ENCODE measurements at regions of chr2 and their contacts with region 1.

Region 1: DNA sequence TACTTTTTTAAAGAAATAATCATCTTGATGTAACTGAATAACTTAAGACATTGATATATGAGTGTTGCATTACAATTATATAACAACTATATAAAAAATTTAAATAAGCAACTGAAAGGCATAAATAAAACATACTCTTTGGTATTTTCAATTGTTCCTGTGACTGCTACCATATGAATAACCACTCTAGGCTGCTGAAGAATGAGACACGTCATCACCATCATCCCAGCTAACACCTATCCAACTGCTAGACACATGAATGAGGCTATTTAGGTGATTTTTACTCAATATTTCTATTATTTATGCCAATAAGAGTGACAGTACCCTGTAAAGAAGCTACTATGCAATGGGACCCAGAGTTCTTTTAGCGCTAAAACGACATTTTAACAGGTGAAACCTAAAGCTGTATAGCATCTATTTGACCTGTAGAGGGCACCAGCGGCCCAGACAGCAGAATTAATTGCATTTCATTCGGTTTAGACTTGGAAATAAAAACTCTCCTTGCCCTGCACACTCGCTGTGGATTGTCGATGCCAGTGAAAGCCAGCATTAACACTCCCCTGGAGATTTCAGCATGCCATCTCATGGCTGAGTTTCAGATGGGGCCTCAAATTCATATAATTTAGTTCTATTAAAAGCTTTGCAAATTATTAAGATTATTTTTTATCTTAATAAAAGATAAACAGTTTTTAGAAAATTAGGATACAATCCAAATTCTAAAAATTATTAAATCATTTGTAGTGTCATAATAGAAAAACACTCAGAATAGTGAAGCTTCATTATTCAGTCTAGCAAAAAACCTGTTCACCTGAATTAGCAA is 89.4 kb upstream of the MAP2 start:
- DNase-seq: peak; percentile 37
- ATAC-seq: peak; percentile 73; the same call in 1 of the 2 replicates
- H3K4me3 ChIP-seq: no peak overlapping the region
- H3K27ac ChIP-seq: no peak overlapping the region
- H3K4me1 ChIP-seq: no peaks in the 10 kb centered on the region
- H3K27me3 ChIP-seq: no peaks in the 10 kb centered on the region
- CTCF ChIP-seq: peak; percentile 86
- POLR2A ChIP-seq: no peak
- RAD21 ChIP-seq: peak; percentile 88

Region 2: DNA sequence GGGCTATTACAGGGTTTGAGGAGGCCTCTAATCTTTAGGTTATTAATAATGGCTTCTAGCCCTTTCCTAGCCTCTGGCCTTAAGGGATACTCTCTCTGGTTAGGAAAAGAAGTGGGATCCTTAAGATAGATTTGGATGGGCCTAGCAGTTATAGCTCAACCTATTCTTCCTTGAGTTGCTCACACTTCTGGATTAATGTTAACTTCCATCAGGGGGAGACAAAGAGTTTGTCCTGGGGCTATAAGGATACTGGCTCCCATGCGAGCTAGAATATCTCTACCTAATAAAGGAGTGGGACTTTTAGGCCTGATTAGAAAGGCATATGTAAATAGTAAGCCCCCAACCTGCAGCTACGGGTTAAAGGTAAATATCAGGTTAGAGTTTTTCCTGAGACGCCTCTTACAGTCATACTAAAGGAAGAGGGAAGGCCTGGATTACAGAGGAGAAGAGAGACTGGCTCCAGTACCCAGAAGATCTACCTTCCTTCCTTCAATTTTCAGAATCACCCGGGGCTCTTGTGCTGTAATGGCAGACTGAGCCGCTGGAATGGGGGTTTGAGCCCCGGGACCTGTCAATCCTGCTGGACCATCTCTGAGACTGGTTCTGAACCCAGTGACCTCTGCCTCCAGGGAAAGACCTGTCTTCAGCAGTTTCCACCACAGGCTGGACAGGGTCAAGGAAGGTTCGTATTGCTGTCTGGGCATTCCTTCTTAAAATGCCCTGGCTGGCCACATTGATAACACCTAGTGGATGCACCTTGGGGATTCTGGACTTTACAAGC is 941.9 kb before region 1 on chr2:
- CTCF ChIA-PET with region 1: interaction called, 3 read pairs
- POLR2A ChIA-PET with region 1: no interaction called
- dilution Hi-C with region 1: no loop called
- in situ Hi-C with region 1: no loop called
- intact Hi-C with region 1: loop called (anchors 2 kb)
- DNase-seq: no peak
- ATAC-seq: no peak
- H3K4me3 ChIP-seq: no peak overlapping the region
- H3K27ac ChIP-seq: no peak overlapping the region
- H3K4me1 ChIP-seq: no peaks in the 10 kb centered on the region
- H3K27me3 ChIP-seq: no peaks in the 10 kb centered on the region
- CTCF ChIP-seq: peak; percentile 22
- POLR2A ChIP-seq: no peak
- RAD21 ChIP-seq: no peak

Region 3: GRCh38 chr2:208985644-208986043 is 348.8 kb before region 1 on chr2:
- CTCF ChIA-PET with region 1: no interaction called
- POLR2A ChIA-PET with region 1: no interaction called
- dilution Hi-C with region 1: no loop called
- in situ Hi-C with region 1: no loop called
- intact Hi-C with region 1: no loop called
- DNase-seq: no peak
- ATAC-seq: no peak
- H3K4me3 ChIP-seq: no peak overlapping the region
- H3K27ac ChIP-seq: no peak overlapping the region
- H3K4me1 ChIP-seq: no peaks in the 10 kb centered on the region
- H3K27me3 ChIP-seq: no peaks in the 10 kb centered on the region
- CTCF ChIP-seq: no peak
- POLR2A ChIP-seq: no peak
- RAD21 ChIP-seq: no peak

Region 4: GRCh38 chr2:209314653-209315052 is 19.8 kb before region 1 on chr2:
- CTCF ChIA-PET with region 1: no interaction called
- POLR2A ChIA-PET with region 1: no interaction called
- dilution Hi-C with region 1: no loop called
- in situ Hi-C with region 1: no loop called
- intact Hi-C with region 1: no loop called
- DNase-seq: no peak
- ATAC-seq: no peak
- H3K4me3 ChIP-seq: no peak overlapping the region
- H3K27ac ChIP-seq: no peak overlapping the region
- H3K4me1 ChIP-seq: no peaks in the 10 kb centered on the region
- H3K27me3 ChIP-seq: no peaks in the 10 kb centered on the region
- CTCF ChIP-seq: no peak
- POLR2A ChIP-seq: no peak
- RAD21 ChIP-seq: no peak

Region 5: GRCh38 chr2:209556354-209556961 is 222.1 kb after region 1 on chr2:
- CTCF ChIA-PET with region 1: interaction called, 8 read pairs
- POLR2A ChIA-PET with region 1: no interaction called
- dilution Hi-C with region 1: no loop called
- in situ Hi-C with region 1: no loop called
- intact Hi-C with region 1: loop called (anchors 1 kb)
- DNase-seq: peak; percentile 59
- ATAC-seq: peak; percentile 61
- H3K4me3 ChIP-seq: no peak overlapping the region
- H3K27ac ChIP-seq: no peak overlapping the region
- H3K4me1 ChIP-seq: no peaks in the 10 kb centered on the region
- H3K27me3 ChIP-seq: no peaks in the 10 kb centered on the region
- CTCF ChIP-seq: peak; percentile 67
- POLR2A ChIP-seq: no peak
- RAD21 ChIP-seq: peak; percentile 78

Region 6: DNA sequence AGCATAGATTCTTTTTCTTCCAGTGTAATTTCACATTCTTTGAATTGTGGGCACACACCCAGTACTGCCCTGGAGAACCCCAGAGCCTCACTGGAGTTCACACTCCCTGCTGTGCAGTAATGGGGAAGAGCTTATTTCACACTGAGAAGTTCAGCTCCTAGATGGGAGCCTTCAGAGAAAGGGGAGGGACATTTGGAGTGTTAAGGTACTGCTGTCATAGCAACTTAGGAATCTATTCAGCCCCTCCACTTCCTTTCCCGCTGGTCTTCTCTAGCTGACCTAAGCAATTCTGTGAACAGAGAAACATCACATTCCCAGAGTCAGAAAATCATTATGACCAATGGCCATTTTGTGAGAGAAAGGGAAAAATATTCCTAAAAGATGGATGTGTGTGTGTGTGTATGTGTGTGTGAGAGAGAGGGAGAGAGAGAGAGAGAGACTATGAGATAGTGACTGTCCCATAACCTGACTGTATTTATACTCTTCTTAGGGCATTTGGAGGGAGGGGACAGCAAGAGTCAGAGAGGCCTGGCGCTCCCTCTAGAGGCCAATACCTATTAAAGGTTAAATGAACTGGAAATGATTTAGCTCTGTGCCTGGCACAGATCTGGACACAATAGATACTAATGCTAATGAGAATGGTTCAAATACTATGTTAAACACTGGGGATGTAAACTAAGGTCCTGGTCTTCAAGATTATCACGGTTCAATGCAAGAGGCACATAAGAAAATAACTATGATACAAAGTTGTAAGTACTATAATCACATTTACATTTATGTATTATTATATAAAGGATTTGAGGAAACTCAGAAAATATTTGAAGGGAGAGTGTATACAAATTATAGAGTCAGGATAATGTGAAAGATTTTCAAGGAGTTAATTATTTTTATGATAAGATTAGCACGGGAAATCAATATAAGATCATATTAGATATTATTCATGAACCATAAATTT is 626.5 kb after region 1 on chr2:
- CTCF ChIA-PET with region 1: no interaction called
- POLR2A ChIA-PET with region 1: no interaction called
- dilution Hi-C with region 1: no loop called
- in situ Hi-C with region 1: loop called (anchors 25 kb)
- intact Hi-C with region 1: loop called (anchors 2 kb)
- DNase-seq: peak; percentile 37
- ATAC-seq: peak; percentile 93
- H3K4me3 ChIP-seq: no peak overlapping the region
- H3K27ac ChIP-seq: no peak overlapping the region
- H3K4me1 ChIP-seq: no peaks in the 10 kb centered on the region
- H3K27me3 ChIP-seq: no peaks in the 10 kb centered on the region
- CTCF ChIP-seq: peak; percentile 64
- POLR2A ChIP-seq: no peak
- RAD21 ChIP-seq: peak; percentile 51

Region 7: DNA sequence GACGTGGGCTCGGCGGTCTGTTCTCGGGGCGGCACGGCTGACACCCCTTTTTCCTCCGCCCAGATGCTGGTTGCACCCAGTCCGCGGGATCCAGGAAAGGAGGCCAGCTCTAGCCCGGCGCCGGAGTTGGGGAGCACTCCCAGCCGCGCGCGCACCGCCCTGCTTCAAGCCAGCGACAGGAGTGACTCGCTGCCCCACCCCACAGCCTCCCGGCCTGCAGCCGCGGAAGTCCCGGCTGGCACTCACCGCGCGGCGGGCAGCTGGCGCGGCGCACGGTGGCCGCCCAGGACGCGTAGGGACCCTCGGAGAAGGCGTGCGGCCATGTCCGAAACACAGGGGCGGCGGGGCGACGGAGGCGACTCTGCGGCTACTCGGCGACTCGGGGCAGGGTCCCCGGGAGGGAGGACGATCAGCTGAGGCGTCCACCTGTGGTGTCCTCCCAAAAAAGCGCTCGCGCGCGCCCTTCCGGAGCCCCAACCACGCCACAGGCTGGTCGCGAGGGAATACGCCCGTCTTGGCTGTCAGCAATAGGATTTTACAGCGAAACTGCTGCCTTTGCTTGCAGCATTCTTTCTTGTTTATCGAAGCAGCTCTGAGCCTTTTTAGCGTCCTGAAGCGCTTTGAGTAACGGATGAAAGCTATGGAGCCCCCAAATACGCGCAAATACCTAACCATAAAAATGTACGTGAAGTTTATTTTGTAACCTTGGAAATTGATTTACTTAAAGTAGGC is 890.7 kb after region 1 on chr2 and contains the start of gene ACADL:
- CTCF ChIA-PET with region 1: interaction called, 4 read pairs
- POLR2A ChIA-PET with region 1: no interaction called
- dilution Hi-C with region 1: no loop called
- in situ Hi-C with region 1: loop called (anchors 25 kb)
- intact Hi-C with region 1: no loop called
- DNase-seq: no peak
- ATAC-seq: peak; percentile 73
- H3K4me3 ChIP-seq: peak within 1 kb of the TSS; percentile 26
- H3K27ac ChIP-seq: no peak within 1 kb of the TSS
- H3K4me1 ChIP-seq: no peaks in the 10 kb centered on the region
- H3K27me3 ChIP-seq: peaks cover 17% of the 10 kb centered on the region
- CTCF ChIP-seq: no peak
- POLR2A ChIP-seq: no peak
- RAD21 ChIP-seq: no peak
- total RNA-seq, gene ACADL: not detected in 2 replicates